Ovary (tissue), 10 donors: ENCODE measurements at regions of chr7 and their contacts with region 1.

Region 1: DNA sequence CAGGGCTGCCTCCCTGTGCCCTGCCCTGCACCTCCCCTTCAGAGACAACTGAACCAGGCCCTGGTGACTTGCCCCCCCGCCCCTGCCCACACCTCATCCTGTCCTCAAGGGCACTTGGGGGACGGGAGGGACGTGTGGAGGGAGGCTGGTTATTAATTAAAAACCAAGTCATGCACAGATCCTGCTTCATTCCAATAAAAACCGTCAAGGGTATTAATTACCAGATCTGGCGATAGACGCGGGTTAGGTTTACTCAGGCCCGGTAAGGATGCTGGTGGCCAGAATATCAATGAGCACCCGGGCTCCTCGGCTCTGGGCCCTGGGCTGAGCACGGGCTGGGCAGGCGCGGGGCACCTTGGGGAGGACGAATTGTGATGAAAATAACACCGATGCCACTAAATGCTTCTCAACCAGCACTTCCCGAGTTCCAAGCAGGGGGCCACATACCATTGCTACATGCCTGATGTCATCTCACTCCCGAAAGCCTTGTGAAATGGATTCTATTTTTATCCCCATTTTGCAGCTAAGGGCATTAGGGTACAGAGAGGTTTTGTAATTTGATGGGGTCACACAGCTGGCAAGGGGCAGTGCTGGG is 24.5 kb upstream of the GTF2IRD1 start:
- DNase-seq: no peak
- H3K4me3 ChIP-seq: no peak overlapping the region
- H3K27ac ChIP-seq: no peak overlapping the region
- H3K4me1 ChIP-seq: no peaks in the 10 kb centered on the region
- H3K27me3 ChIP-seq: no peaks in the 10 kb centered on the region
- CTCF ChIP-seq: no peak
- EP300 ChIP-seq: no peak
- POLR2A ChIP-seq: no peak

Region 2: GRCh38 chr7:74525880-74526279 is 96.6 kb after region 1 on chr7:
- intact Hi-C with region 1: loop called in 1 of 4 experiments (anchors 5 kb)
- DNase-seq: no peak
- H3K4me3 ChIP-seq: no peak overlapping the region
- H3K27ac ChIP-seq: no peak overlapping the region
- H3K4me1 ChIP-seq: no peaks in the 10 kb centered on the region
- H3K27me3 ChIP-seq: no peaks in the 10 kb centered on the region
- CTCF ChIP-seq: no peak
- EP300 ChIP-seq: no peak
- POLR2A ChIP-seq: no peak

Region 3: GRCh38 chr7:74544706-74545469 is 115.6 kb after region 1 on chr7:
- intact Hi-C with region 1: loop called in 1 of 4 experiments (anchors 10 kb)
- DNase-seq: no peak
- H3K4me3 ChIP-seq: no peak overlapping the region
- H3K27ac ChIP-seq: no peak overlapping the region
- H3K4me1 ChIP-seq: no peaks in the 10 kb centered on the region
- H3K27me3 ChIP-seq: no peaks in the 10 kb centered on the region
- CTCF ChIP-seq: no peak
- EP300 ChIP-seq: no peak
- POLR2A ChIP-seq: no peak